Activated CD4-positive, alpha-beta memory T cell treated with anti-CD3 and anti-CD28 coated beads for 36 hours (primary cell): ENCODE measurements at regions of chr17 and their contacts with region 1.

Region 1: GRCh38 chr17:57243171-57243948 is 13.0 kb upstream of the MSI2 start:
- DNase-seq: peak; percentile 86
- H3K4me3 Mint-ChIP-seq: no peak overlapping the region
- H3K27ac Mint-ChIP-seq: no peak overlapping the region
- H3K4me1 Mint-ChIP-seq: no peaks in the 10 kb centered on the region
- H3K27me3 Mint-ChIP-seq: peaks cover 2% of the 10 kb centered on the region

Region 2: DNA sequence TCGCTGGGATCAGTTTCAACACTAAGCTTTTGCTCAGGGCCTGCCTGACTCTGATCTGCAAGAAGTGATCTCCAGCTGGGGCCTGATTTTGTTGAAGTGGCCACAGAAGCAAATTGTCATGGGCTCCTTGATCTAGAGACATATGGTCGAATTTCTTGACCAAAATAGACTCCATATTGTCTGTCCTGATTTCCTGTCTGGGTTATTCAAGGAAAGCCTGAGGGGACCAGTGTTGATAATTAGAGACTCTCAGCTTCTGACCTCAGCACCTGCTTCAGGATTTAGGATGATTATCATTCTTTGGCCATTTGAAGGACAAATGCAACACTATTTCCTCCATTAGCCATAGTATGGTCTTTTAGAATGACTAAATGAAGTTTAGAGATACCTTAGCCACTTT is 35.9 kb before region 1 on chr17:
- CTCF ChIA-PET with region 1: interaction called, 14 read pairs
- POLR2A ChIA-PET with region 1: no interaction called
- intact Hi-C with region 1: no loop called
- DNase-seq: no peak
- H3K4me3 Mint-ChIP-seq: no peak overlapping the region
- H3K27ac Mint-ChIP-seq: no peak overlapping the region
- H3K4me1 Mint-ChIP-seq: peaks cover 4% of the 10 kb centered on the region
- H3K27me3 Mint-ChIP-seq: peaks cover 11% of the 10 kb centered on the region

Region 3: GRCh38 chr17:57284984-57285646 is 41.8 kb after region 1 on chr17:
- CTCF ChIA-PET with region 1: interaction called, 36 read pairs
- POLR2A ChIA-PET with region 1: no interaction called
- intact Hi-C with region 1: no loop called
- DNase-seq: peak; percentile 76
- H3K4me3 Mint-ChIP-seq: peak overlapping the region; percentile 50
- H3K27ac Mint-ChIP-seq: peak overlapping the region; percentile 76
- H3K4me1 Mint-ChIP-seq: peaks cover 66% of the 10 kb centered on the region
- H3K27me3 Mint-ChIP-seq: no peaks in the 10 kb centered on the region

Region 4: DNA sequence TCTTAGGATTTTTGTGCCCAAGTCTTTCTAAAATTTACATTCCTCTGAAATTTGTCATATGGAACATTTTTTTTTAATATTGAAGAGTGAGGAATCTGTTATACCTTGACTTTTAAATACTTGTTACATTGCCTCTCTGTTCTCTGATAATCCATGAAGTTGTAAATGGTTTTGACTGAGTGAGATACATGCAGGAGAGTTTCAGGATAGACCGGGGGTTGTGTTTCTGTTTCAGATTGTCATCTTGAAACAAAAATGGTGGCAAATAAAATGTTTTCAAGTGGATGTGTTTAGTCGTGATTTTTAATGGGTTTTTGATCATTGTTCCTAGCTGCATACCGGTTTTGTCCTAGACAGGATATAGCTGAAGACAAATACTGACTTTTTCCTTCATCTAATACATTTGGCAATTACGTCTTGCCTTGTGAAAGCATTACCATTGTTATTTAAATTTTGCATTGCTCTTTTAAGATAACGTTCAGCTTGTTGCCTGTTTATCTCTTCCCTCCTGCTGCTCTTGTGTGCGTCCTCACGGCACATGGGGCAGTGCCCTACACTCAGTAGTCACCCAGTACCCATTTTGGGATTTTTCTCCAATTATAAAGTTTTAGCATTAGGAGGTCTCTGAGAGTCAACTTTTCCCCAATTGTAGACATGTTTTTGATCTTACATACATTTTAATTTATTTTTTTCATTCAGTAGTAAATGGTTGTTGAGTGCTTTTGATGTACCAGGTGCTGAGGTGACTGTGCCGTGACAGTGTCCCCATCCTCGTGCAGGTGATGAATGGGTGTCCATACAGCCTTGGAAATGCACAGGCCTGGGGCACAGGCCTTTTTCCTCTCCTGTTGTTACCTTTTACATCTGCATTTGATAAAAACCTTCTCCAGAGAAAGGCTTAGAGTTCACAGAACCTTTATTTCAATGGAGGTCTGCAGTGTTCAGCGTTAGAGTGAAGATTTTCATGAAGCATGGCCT is 182.8 kb after region 1 on chr17:
- CTCF ChIA-PET with region 1: interaction called, 10 read pairs
- POLR2A ChIA-PET with region 1: no interaction called
- intact Hi-C with region 1: no loop called
- DNase-seq: no peak
- H3K4me3 Mint-ChIP-seq: no peak overlapping the region
- H3K27ac Mint-ChIP-seq: no peak overlapping the region
- H3K4me1 Mint-ChIP-seq: peaks cover 45% of the 10 kb centered on the region
- H3K27me3 Mint-ChIP-seq: no peaks in the 10 kb centered on the region

Region 5: DNA sequence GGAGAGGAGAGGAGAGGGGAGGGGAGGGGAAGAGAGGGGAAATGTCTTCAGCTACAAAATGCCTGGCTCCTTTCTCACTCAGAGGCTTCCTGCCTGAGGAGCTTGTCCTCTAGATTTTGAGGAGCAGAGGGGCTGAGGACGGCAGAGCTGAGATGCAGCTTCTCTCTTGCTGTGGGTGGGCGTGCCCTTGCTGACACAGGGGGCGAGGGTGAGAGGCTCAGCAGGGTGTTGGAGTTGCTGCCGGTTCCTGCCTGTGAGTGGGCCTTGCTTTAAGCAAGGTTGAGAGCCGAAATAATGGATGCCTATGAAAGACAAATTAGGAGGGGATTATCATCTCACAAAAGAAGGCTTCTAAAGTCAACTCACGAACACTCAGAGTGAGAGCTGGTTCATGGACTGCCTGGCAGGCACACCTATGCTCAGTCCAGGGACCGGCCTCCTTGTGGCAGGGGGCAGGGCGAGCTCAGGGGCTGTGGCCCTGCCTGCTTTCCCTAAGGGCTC is 228.6 kb after region 1 on chr17:
- CTCF ChIA-PET with region 1: interaction called, 12 read pairs
- POLR2A ChIA-PET with region 1: no interaction called
- intact Hi-C with region 1: no loop called
- DNase-seq: no peak
- H3K4me3 Mint-ChIP-seq: no peak overlapping the region
- H3K27ac Mint-ChIP-seq: no peak overlapping the region
- H3K4me1 Mint-ChIP-seq: peaks cover 15% of the 10 kb centered on the region
- H3K27me3 Mint-ChIP-seq: no peaks in the 10 kb centered on the region

Region 6: GRCh38 chr17:57535249-57535966 is 292.0 kb after region 1 on chr17:
- CTCF ChIA-PET with region 1: interaction called, 10 read pairs
- POLR2A ChIA-PET with region 1: no interaction called
- intact Hi-C with region 1: no loop called
- DNase-seq: no peak
- H3K4me3 Mint-ChIP-seq: no peak overlapping the region
- H3K27ac Mint-ChIP-seq: no peak overlapping the region
- H3K4me1 Mint-ChIP-seq: peaks cover 18% of the 10 kb centered on the region
- H3K27me3 Mint-ChIP-seq: no peaks in the 10 kb centered on the region

Region 7: GRCh38 chr17:57783106-57783742 is 539.9 kb after region 1 on chr17:
- CTCF ChIA-PET with region 1: interaction called, 36 read pairs
- POLR2A ChIA-PET with region 1: no interaction called
- intact Hi-C with region 1: no loop called
- DNase-seq: peak; percentile 86
- H3K4me3 Mint-ChIP-seq: no peak overlapping the region
- H3K27ac Mint-ChIP-seq: no peak overlapping the region
- H3K4me1 Mint-ChIP-seq: no peaks in the 10 kb centered on the region
- H3K27me3 Mint-ChIP-seq: peaks cover 19% of the 10 kb centered on the region